A673 (cell line): ENCODE measurements at regions of chr3 and their contacts with region 1.

Region 1: DNA sequence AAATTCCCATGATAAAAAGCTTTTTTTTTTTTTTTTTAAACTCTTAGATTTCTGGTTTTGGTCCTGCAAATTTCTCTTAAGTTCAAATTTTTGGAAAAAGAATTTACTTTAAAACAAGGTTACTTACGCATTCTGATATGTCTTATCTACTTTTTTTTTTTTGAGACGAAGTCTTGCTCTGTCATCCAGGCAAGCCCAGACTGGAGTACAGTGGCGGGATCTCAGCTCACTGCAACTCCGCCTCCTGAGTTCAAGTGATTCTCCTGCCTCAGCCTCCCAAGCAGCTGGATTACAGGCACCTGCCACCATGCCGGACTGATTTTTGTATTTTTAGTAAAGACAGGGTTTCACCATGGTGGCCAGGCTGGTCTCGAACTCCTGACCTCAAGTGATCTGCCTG is 83.2 kb downstream of the RASA2 start:
- DNase-seq: no peak
- H3K4me3 ChIP-seq: no peak overlapping the region
- H3K27ac ChIP-seq: no peak overlapping the region
- H3K4me1 ChIP-seq: no peaks in the 10 kb centered on the region
- H3K27me3 ChIP-seq: no peaks in the 10 kb centered on the region
- CTCF ChIP-seq: no peak

Region 2: GRCh38 chr3:141605883-141606282 is 35.8 kb after region 1 on chr3:
- CTCF ChIA-PET with region 1: interaction called, 3 read pairs
- POLR2A ChIA-PET with region 1: interaction called, 13 read pairs
- intact Hi-C with region 1: no loop called
- DNase-seq: no peak
- H3K4me3 ChIP-seq: no peak overlapping the region
- H3K27ac ChIP-seq: no peak overlapping the region
- H3K4me1 ChIP-seq: no peaks in the 10 kb centered on the region
- H3K27me3 ChIP-seq: no peaks in the 10 kb centered on the region
- CTCF ChIP-seq: no peak